CD14-positive monocyte (primary cell): ENCODE measurements at regions of chr12 and their contacts with region 1.

Region 1: GRCh38 chr12:52221912-52222457 is 11.1 kb upstream of the KRT7 start:
- DNase-seq: peak; percentile 59 to 77 (median 66)
- H3K4me3 ChIP-seq: no peak overlapping the region
- H3K4me3 Mint-ChIP-seq: peak overlapping the region in 1 of 2 donors; percentile 22
- H3K27ac ChIP-seq: no peak overlapping the region
- H3K27ac Mint-ChIP-seq: peak overlapping the region in 1 of 7 donors; percentile 22
- H3K4me1 ChIP-seq: peaks cover 30 to 41% of the 10 kb centered on the region in 2 donors
- H3K4me1 Mint-ChIP-seq: peaks cover 39% of the 10 kb centered on the region
- H3K27me3 ChIP-seq: peaks cover 0 to 5% of the 10 kb centered on the region in 2 donors
- H3K27me3 Mint-ChIP-seq: peaks cover 15 to 24% (median 23%) of the 10 kb centered on the region in 3 donors
- CTCF ChIP-seq: peak; percentile 74

Region 2: GRCh38 chr12:52278541-52279421 is 56.8 kb after region 1 on chr12:
- intact Hi-C with region 1: loop called in 1 of 2 experiments (anchors 5 kb)
- DNase-seq: peak; percentile 66 to 73 (median 71)
- H3K4me3 ChIP-seq: no peak overlapping the region
- H3K4me3 Mint-ChIP-seq: peak overlapping the region in 1 of 2 donors; percentile 76
- H3K27ac ChIP-seq: no peak overlapping the region
- H3K27ac Mint-ChIP-seq: peak overlapping the region in 5 of 7 donors; percentile 60 to 94 (median 81)
- H3K4me1 ChIP-seq: peaks cover 29 to 33% of the 10 kb centered on the region in 2 donors
- H3K4me1 Mint-ChIP-seq: peaks cover 37% of the 10 kb centered on the region
- H3K27me3 ChIP-seq: peaks cover 2 to 41% of the 10 kb centered on the region in 2 donors
- H3K27me3 Mint-ChIP-seq: peaks cover 19 to 44% (median 21%) of the 10 kb centered on the region in 3 donors
- CTCF ChIP-seq: peak; percentile 97

Region 3: GRCh38 chr12:52327052-52327829 is 105.3 kb after region 1 on chr12:
- intact Hi-C with region 1: loop called (anchors 5 kb)
- DNase-seq: peak; percentile 81 to 90 (median 87)
- H3K4me3 ChIP-seq: no peak overlapping the region
- H3K4me3 Mint-ChIP-seq: no peak overlapping the region
- H3K27ac ChIP-seq: no peak overlapping the region
- H3K27ac Mint-ChIP-seq: no peak overlapping the region
- H3K4me1 ChIP-seq: no peaks in the 10 kb centered on the region
- H3K4me1 Mint-ChIP-seq: peaks cover 4% of the 10 kb centered on the region
- H3K27me3 ChIP-seq: peaks cover 0 to 11% of the 10 kb centered on the region in 2 donors
- H3K27me3 Mint-ChIP-seq: peaks cover 16 to 36% (median 22%) of the 10 kb centered on the region in 3 donors
- CTCF ChIP-seq: peak; percentile 88